Transverse colon (tissue), 4 donors: ENCODE measurements at regions of chr1 and their contacts with region 1.

Region 1: DNA sequence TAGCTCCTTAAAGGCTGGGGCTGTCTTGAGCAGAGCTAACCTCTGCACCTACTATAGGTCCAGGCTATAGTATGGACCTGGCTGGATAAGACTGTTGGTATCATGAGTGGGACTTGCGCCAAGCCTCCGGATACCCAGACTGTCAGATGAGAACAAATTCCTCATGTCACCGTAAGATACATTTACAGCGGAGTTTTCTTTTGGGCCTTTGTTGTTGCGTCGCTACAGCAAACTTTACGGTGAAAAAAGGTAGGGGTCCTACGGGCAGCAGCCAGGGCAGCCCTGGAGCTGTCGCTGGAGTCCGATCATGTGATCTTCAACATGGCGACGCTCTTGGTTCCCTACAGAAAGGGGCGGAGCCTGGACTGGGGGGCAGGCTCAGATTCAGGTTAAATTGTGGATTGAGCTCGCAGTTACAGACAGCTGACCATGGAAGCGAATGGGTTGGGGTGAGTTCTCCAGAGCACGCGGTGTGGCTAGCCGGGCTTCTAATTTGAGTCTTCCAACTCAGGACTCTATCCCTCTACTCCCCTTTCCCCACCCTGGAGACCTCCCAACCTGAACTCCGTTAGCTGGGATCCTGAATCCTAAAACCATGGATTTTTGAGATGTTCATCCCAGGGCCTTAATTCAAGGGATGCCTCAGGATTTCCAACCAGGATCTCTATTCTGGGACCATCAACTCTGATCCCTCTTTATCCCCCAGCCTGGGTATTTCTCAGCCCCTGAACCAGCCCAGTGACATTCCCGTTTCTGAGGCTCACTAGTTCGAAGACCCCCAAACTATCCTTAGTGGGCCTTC is at the start of gene UROD:
- DNase-seq: peak; percentile 93
- H3K4me3 ChIP-seq: peak within 1 kb of the TSS; percentile 79 to 94 (median 86)
- H3K27ac ChIP-seq: peak within 1 kb of the TSS; percentile 88 to 93 (median 91)
- H3K4me1 ChIP-seq: peaks cover 18 to 39% (median 34%) of the 10 kb centered on the region in 4 donors
- H3K27me3 ChIP-seq: no peaks in the 10 kb centered on the region
- CTCF ChIP-seq: no peak
- EP300 ChIP-seq: no peak
- POLR2A ChIP-seq: peak; percentile 62
- total RNA-seq, gene UROD: 46.4 to 85.7 (median 63.9) TPM

Region 2: DNA sequence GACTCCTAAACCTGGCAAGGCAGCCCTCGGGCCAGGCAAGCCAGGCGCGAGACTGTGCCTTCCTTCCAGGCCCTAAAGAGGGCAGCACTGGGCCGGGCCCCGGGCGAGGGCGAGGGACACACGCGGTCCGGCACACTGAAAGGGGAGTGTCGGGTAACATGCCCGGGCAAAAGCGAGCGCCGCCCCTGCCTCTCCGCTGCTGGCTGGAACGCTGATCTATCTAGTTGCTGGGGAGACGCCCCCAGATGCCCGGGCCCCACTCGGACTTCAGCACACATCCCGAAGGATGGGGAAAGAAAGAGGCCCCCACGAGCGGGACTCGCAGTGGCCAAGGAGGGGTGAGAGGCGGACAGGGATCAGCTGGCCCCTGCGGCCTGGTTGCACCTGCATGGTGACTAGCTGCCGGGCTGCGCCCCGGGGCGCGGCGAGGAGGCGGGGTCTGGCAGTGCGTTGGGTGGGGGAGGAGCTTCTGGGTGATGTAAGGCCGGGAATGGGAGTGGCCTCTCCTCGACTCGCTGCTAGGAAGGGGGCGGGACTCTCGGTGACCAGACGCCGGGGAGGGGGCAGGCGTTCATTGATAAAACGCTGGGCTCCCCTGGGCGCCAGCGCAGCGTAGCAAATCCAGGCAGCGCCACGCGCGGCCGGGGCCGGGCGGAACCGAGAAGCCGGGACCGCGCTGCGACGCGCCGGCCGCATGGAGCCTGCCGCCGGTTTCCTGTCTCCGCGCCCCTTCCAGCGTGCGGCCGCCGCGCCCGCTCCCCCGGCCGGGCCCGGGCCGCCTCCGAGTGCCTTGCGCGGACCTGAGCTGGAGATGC is 212.1 kb before region 1 on chr1 and contains the start of gene PLK3:
- in situ Hi-C with region 1: loop called in 1 of 4 experiments (anchors 25 kb)
- intact Hi-C with region 1: no loop called
- DNase-seq: peak; percentile 99
- H3K4me3 ChIP-seq: peak within 1 kb of the TSS; percentile 58 to 91 (median 75)
- H3K27ac ChIP-seq: peak within 1 kb of the TSS; percentile 90 to 96 (median 94)
- H3K4me1 ChIP-seq: peaks cover 6 to 26% (median 16%) of the 10 kb centered on the region in 4 donors
- H3K27me3 ChIP-seq: no peaks in the 10 kb centered on the region
- CTCF ChIP-seq: peak; percentile 84 to 97 (median 92)
- EP300 ChIP-seq: peak; percentile 29
- POLR2A ChIP-seq: peak; percentile 92
- total RNA-seq, gene PLK3: 12.4 to 87.2 (median 16.3) TPM

Region 3: GRCh38 chr1:45216200-45216541 is 204.1 kb after region 1 on chr1:
- in situ Hi-C with region 1: loop called in 2 of 4 experiments (anchors 10 kb)
- intact Hi-C with region 1: no loop called
- DNase-seq: no peak
- H3K4me3 ChIP-seq: no peak overlapping the region
- H3K27ac ChIP-seq: no peak overlapping the region
- H3K4me1 ChIP-seq: peaks cover 0 to 4% (median 0%) of the 10 kb centered on the region in 4 donors
- H3K27me3 ChIP-seq: no peaks in the 10 kb centered on the region
- CTCF ChIP-seq: no peak
- EP300 ChIP-seq: no peak
- POLR2A ChIP-seq: no peak

Region 4: DNA sequence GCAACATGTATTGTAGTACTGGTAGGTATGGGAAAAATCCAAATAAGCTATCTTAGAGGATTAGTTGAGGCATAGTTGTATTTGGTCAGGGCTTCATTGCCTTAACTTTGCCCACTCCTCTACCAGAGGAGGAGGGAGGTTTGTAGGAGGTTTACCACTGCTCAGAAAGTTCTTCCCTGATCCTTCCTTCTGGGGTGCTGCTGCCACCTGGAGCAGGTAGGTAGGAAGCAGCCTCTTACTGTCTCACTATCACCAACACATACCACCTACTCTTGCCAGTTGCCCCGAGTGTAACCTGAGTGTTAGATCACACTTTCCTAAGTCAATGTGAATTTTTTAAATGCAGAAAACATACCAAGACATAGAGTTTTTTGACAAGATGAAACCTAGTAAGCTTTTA is 218.5 kb after region 1 on chr1:
- in situ Hi-C with region 1: loop called in 2 of 4 experiments (anchors 10 kb)
- intact Hi-C with region 1: no loop called
- DNase-seq: peak; percentile 40
- H3K4me3 ChIP-seq: no peak overlapping the region
- H3K27ac ChIP-seq: no peak overlapping the region
- H3K4me1 ChIP-seq: no peaks in the 10 kb centered on the region
- H3K27me3 ChIP-seq: no peaks in the 10 kb centered on the region
- CTCF ChIP-seq: peak; percentile 30 to 57 (median 43)
- EP300 ChIP-seq: no peak
- POLR2A ChIP-seq: no peak

Region 5: DNA sequence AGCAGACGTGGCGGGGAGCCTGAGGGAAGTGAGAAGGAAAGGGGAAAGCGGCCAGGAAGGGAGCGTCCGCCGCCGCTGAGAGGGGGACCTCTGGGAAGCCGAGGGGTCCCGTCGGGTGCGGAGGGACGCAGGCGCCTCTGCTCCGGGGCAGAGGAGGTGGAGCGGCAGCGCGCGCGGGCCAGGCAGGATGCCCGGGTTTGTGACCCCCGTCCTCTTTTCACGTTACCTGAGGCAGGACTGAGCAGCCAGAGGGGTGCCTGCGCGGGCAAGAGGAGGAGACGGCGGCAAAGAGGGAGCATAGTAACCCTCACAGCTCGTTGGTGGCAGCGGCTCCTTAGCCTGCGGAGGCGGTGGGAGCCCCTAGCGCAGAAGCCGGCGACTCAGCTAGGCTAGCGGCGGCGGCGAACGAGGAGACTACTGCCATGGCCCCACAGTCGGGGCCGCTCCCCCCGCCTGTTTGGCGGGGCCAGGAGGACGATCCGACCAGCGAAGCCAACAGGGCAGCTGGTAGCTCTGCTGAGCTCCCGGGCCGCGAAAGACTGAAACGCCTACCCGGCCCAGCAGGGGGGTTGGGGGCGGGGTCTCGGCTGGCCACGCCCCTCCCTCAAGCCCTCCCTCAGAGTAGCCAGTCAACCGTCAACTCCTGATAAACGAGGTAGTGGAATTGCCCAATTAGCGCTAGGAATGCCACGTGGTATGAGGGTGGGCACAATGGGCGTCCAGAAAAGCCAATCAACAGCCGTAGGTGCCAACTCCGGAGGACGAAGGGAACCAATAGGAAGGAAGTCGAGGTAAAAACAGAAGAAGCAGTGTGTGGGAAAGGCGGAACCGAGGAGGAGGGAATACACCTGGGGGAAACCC is 478.8 kb after region 1 on chr1 and contains the start of gene TESK2:
- in situ Hi-C with region 1: loop called in 3 of 4 experiments (anchors 10 kb)
- intact Hi-C with region 1: no loop called
- DNase-seq: peak; percentile 98
- H3K4me3 ChIP-seq: peak within 1 kb of the TSS; percentile 50 to 99 (median 76)
- H3K27ac ChIP-seq: peak within 1 kb of the TSS; percentile 86 to 94 (median 91)
- H3K4me1 ChIP-seq: peaks cover 0 to 16% (median 3%) of the 10 kb centered on the region in 4 donors
- H3K27me3 ChIP-seq: no peaks in the 10 kb centered on the region
- CTCF ChIP-seq: peak in 3 of 5 experiments; percentile 20 to 70 (median 44)
- EP300 ChIP-seq: no peak
- POLR2A ChIP-seq: peak; percentile 90
- total RNA-seq, gene TESK2: 5.2 to 32.2 (median 14.5) TPM